Right lobe of liver (tissue), 6 donors: ENCODE measurements at regions of chr4 and their contacts with region 1.

Region 1: GRCh38 chr4:40939856-40940255 is 190.1 kb downstream of the NSUN7 start:
- DNase-seq: no peak
- ATAC-seq: no peak
- H3K4me3 ChIP-seq: no peak overlapping the region
- H3K27ac ChIP-seq: no peak overlapping the region
- H3K4me1 ChIP-seq: peaks cover 0 to 10% (median 0%) of the 10 kb centered on the region in 4 donors
- H3K27me3 ChIP-seq: no peaks in the 10 kb centered on the region
- CTCF ChIP-seq: no peak
- POLR2A ChIP-seq: no peak

Region 2: DNA sequence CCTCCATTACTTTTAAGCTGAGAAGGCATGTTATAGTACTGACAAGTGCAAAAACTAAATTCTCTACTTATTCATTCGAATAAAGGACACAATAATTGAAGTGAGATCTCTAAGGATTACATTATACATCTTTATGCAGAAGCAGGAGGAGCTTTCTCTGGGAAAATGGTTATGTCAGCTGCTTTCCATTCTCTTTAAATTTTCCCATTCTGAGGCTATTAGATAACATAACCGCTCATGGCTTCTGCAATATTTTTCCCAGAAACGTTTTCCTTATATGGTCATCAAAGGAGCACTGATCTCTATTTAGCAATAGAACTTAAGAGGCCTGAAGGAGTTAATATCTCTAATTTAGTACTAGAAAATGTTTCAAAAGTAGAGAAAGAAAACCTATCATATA is 31.5 kb after region 1 on chr4:
- intact Hi-C with region 1: loop called in 1 of 2 experiments (anchors 5 kb)
- DNase-seq: no peak
- ATAC-seq: no peak
- H3K4me3 ChIP-seq: no peak overlapping the region
- H3K27ac ChIP-seq: no peak overlapping the region
- H3K4me1 ChIP-seq: no peaks in the 10 kb centered on the region
- H3K27me3 ChIP-seq: no peaks in the 10 kb centered on the region
- CTCF ChIP-seq: no peak
- POLR2A ChIP-seq: no peak

Region 3: DNA sequence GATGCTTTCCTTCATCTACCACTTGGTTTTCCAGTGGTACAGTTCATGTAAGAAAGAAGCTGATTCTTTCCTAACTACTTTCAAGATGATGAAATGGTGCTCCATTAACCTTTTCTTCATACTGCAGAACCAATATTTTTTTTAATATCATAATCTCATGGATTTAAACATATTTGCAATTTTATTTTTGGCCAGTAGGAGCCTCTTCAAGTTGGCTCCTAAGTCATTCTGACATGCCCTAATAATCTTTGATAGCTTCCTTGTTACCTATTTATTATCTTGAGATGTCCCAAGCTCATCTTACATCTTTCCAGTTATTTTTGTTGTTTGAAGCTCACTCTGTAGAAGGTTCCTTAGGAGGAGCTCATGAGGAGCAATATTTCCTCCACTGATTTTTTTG is 104.3 kb after region 1 on chr4:
- intact Hi-C with region 1: no loop called
- DNase-seq: no peak
- ATAC-seq: no peak
- H3K4me3 ChIP-seq: no peak overlapping the region
- H3K27ac ChIP-seq: no peak overlapping the region
- H3K4me1 ChIP-seq: no peaks in the 10 kb centered on the region
- H3K27me3 ChIP-seq: no peaks in the 10 kb centered on the region
- CTCF ChIP-seq: no peak
- POLR2A ChIP-seq: no peak